Left cardiac atrium (tissue), 4 donors: ENCODE measurements at regions of chr12 and their contacts with region 1.

Region 1: DNA sequence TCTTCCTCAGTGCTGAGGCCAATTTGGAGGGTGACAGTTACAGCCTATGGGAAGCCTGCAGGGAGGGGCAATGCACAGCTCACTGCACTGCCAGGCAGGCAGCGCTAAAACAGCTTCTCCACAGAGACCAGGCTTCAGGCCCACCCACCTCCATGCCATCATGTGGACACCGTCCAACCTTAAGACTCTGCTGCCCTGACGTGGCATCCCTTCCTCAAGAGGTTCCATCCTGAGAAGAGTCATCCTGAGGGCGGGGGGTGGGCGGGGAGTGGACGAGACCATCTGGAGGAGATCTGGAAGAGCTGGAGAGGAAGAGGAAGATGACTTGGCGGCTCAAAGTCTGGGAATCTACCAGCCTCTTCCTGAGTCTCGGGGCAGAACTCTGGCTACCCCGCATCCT is 8.4 kb upstream of the ACVRL1 start:
- DNase-seq: peak; percentile 23
- ATAC-seq: no peak

Region 2: GRCh38 chr12:51980051-51980808 is 81.3 kb after region 1 on chr12:
- intact Hi-C with region 1: loop called (anchors 1 to 5 kb)
- DNase-seq: peak; percentile 66
- ATAC-seq: peak; percentile 82 to 93

Region 3: GRCh38 chr12:52534487-52534886 is 635.5 kb after region 1 on chr12:
- intact Hi-C with region 1: no loop called
- DNase-seq: no peak
- ATAC-seq: no peak